MCF 10A (cell line): ENCODE measurements at regions of chrX and their contacts with region 1.

Region 1: DNA sequence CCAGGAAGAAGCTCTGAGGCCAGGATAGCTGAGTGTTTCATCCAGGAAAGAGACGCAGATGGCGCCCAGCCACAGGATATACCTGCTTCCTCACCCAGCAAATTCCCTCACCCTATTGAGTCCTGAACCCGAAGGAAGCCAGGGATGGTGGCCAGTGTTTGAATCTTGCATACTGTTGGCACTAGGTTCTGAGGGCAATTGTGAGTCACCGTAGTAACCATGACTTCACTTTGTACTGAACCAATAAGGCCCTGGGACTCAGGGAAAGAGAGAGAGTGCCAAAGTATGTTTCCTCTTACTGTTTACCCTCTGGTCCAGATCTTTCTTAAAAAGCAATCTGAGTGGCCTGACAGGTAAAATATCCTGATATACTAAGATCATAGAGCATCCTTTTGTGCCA is 25.6 kb upstream of the SMIM10L2A start:
- DNase-seq: peak; percentile 57
- H3K4me3 Mint-ChIP-seq: no peak overlapping the region
- H3K27ac Mint-ChIP-seq: no peak overlapping the region
- H3K4me1 Mint-ChIP-seq: peaks cover 6% of the 10 kb centered on the region
- H3K27me3 Mint-ChIP-seq: peaks cover 3% of the 10 kb centered on the region
- CTCF ChIP-seq: no peak

Region 2: DNA sequence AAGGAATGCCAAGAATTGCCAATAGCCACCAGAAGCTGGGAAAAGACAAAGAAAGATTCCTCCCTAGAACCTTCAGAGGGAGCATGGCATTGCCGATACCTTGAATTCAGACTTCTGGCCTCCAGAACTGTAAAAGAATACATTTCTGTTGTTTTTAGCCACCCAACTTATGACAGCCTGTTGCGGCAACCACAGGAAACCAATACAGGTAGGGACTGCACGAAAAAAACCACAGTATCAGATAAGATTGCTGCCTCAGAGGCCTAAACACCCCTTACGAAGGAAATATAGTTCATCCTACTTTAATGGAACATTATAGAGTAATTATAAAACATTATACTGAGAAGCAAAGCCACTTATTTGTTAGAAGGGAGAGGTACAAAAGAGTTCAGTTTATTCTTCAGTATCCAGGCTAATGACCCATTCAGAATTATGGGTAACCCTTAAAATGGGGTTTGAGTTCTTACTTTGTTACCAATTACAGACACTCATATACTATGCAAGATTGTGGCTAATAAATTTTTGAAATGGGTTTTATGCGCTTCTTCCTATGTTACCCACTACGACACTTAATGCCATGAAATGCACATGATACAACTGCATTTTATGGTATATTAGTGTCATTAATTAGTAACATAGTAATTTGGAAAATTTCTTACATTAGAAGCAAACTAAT is 11.8 kb before region 1 on chrX:
- CTCF ChIA-PET with region 1: no interaction called
- POLR2A ChIA-PET with region 1: no interaction called
- intact Hi-C with region 1: loop called (anchors 1 kb)
- DNase-seq: no peak
- H3K4me3 Mint-ChIP-seq: no peak overlapping the region
- H3K27ac Mint-ChIP-seq: no peak overlapping the region
- H3K4me1 Mint-ChIP-seq: peaks cover under 1% of the 10 kb centered on the region
- H3K27me3 Mint-ChIP-seq: peaks cover 22% of the 10 kb centered on the region
- CTCF ChIP-seq: no peak